AG04449 (cell line): ENCODE measurements at regions of chr11 and their contacts with region 1.

Region 1: DNA sequence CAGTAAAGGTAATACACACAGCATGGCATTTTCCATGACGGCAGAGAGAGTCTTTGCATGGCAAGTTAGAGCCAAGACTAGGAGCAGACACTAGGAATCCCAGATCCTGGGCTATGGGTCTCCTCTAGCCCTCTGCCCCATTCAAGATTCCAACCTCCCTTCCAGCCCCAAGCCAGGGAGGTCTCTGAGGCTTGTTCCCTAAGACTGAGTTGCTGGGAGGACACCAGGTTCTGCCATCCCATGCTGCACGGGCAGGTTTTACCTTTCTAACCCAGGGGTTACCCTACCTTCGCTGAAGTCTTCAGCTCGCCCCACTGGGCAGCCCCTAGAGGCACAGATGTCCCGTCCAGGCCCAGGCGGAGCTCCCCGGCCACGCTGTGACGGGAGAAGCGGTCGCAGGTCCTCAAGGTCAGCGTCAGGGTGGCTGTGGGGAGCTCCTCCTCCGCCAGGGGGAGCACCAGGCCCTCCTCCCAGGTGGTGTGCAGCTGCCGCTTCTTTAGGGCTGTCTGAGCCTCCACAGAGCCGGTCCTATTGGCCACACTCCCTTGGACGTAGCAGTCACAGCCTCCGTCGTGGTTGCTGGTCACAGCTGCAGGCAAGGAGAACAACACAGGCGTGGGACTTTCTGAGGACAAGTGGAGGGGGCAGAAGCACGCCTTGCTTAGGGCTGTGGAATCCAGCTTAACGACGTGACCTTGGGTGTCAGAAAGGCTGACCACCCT is 33.8 kb downstream of the SYT13 start:
- DNase-seq: no peak
- H3K4me3 ChIP-seq: no peak overlapping the region
- CTCF ChIP-seq: peak; percentile 93

Region 2: GRCh38 chr11:45238724-45239123 is 13.6 kb before region 1 on chr11:
- CTCF ChIA-PET with region 1: interaction called, 37 read pairs
- POLR2A ChIA-PET with region 1: no interaction called
- DNase-seq: peak; percentile 37
- H3K4me3 ChIP-seq: no peak overlapping the region
- CTCF ChIP-seq: no peak

Region 3: GRCh38 chr11:45267052-45267451 is 14.8 kb after region 1 on chr11:
- CTCF ChIA-PET with region 1: interaction called, 32 read pairs
- POLR2A ChIA-PET with region 1: no interaction called
- DNase-seq: no peak
- H3K4me3 ChIP-seq: no peak overlapping the region
- CTCF ChIP-seq: no peak

Region 4: GRCh38 chr11:45285930-45286632 is 33.8 kb after region 1 on chr11 and contains the start of gene SYT13:
- CTCF ChIA-PET with region 1: interaction called, 10 read pairs
- POLR2A ChIA-PET with region 1: no interaction called
- DNase-seq: no peak
- H3K4me3 ChIP-seq: no peak within 1 kb of the TSS
- CTCF ChIP-seq: no peak